Activated CD4-positive, alpha-beta T cell treated with anti-CD3 and anti-CD28 coated beads for 36 hours (primary cell): ENCODE measurements at regions of chr3 and their contacts with region 1.

Region 1: DNA sequence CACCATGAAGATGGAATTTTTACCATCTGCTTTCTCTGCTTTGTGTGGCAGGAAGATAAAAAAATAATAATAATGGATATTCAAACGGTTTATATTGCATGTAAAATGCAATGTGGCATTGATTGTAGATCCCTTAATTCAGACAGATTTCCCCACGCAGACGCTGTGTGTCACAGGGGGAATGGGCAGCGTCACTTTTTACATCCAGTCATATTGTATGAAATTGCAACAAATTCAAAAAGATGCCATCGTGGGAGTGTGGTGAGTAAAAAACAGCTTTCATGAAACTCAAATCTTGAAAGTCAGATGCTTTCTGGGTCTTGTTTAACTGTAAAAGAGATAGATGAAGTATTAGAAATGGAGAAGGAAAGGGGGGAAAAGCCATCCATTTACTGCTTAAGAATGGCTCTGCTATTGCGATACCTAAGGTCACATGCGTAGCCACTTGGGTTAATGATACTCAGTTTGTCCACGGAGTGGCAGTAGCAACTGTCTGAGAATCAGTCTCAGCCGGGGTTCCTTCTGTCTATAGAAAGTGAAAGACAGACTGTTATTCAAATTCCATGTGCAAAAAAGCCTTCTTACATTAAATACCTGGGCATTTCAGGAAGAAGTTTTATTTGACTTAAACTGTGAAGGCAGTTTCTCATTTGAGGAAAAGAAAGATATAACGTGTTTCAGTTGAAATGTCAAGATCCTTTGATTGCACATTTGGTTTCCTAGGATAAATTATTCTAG is 28.5 kb downstream of the BTD start:
- DNase-seq: peak; percentile 73
- ATAC-seq: peak; percentile 96
- H3K4me3 Mint-ChIP-seq: peak overlapping the region; percentile 52
- H3K27ac Mint-ChIP-seq: peak overlapping the region; percentile 90
- H3K4me1 Mint-ChIP-seq: peaks cover 50% of the 10 kb centered on the region
- H3K27me3 Mint-ChIP-seq: no peaks in the 10 kb centered on the region

Region 2: DNA sequence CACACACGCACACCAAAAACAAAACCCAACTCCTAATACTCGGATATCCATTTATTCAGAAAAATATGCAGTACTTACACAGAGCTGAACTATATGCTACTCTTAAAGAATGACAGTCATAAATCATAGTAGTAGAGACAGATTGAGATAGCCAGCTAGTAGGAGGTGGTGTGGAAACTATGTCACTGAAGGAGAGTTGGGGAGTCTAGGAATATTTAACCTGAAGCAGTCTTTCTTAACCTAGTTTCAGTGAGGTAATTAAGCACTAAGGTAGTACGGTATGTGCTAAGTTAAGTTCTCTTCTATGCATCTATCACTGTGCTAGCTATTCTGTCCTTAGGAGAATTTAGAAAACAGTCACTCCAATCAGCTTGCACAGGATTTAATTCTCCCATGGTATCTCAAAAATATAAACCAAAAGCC is 113.6 kb after region 1 on chr3:
- CTCF ChIA-PET with region 1: no interaction called
- POLR2A ChIA-PET with region 1: no interaction called
- intact Hi-C with region 1: loop called in 1 of 2 experiments (anchors 2 kb)
- DNase-seq: no peak
- ATAC-seq: no peak
- H3K4me3 Mint-ChIP-seq: no peak overlapping the region
- H3K27ac Mint-ChIP-seq: no peak overlapping the region
- H3K4me1 Mint-ChIP-seq: peaks cover 39% of the 10 kb centered on the region
- H3K27me3 Mint-ChIP-seq: no peaks in the 10 kb centered on the region

Region 3: DNA sequence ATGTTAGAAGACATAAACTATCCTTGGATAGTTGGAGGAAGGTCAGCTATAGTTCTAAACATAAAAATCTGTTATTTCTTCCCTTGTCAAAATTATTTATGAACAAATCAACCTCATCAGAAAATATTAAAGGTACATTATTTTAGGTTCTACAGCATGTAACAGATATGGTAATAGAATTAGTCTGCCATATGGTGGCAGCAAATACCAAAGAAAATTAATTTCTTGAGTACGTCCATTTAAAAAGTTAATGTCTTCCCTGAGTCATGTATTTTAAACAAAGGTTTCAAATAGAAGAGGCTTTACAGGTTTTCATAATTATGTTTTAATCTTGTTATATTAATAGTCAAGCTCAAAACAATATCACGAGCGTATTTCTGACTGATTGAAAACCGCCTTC is 185.7 kb after region 1 on chr3:
- CTCF ChIA-PET with region 1: interaction called, 12 read pairs
- POLR2A ChIA-PET with region 1: no interaction called
- intact Hi-C with region 1: loop called (anchors 1 kb)
- DNase-seq: no peak
- ATAC-seq: no peak
- H3K4me3 Mint-ChIP-seq: no peak overlapping the region
- H3K27ac Mint-ChIP-seq: no peak overlapping the region
- H3K4me1 Mint-ChIP-seq: peaks cover 41% of the 10 kb centered on the region
- H3K27me3 Mint-ChIP-seq: no peaks in the 10 kb centered on the region

Region 4: GRCh38 chr3:15953841-15954240 is 323.8 kb after region 1 on chr3:
- CTCF ChIA-PET with region 1: no interaction called
- POLR2A ChIA-PET with region 1: no interaction called
- intact Hi-C with region 1: loop called in 1 of 2 experiments (anchors 10 kb)
- DNase-seq: no peak
- ATAC-seq: peak; percentile 60
- H3K4me3 Mint-ChIP-seq: no peak overlapping the region
- H3K27ac Mint-ChIP-seq: no peak overlapping the region
- H3K4me1 Mint-ChIP-seq: no peaks in the 10 kb centered on the region
- H3K27me3 Mint-ChIP-seq: peaks cover 2% of the 10 kb centered on the region

Region 5: GRCh38 chr3:16177962-16178627 is 548.1 kb after region 1 on chr3:
- CTCF ChIA-PET with region 1: interaction called, 6 read pairs
- POLR2A ChIA-PET with region 1: no interaction called
- intact Hi-C with region 1: loop called (anchors 1 to 10 kb)
- DNase-seq: peak; percentile 85
- ATAC-seq: peak; percentile 87
- H3K4me3 Mint-ChIP-seq: no peak overlapping the region
- H3K27ac Mint-ChIP-seq: no peak overlapping the region
- H3K4me1 Mint-ChIP-seq: no peaks in the 10 kb centered on the region
- H3K27me3 Mint-ChIP-seq: peaks cover 18% of the 10 kb centered on the region

Region 6: GRCh38 chr3:16247276-16248061 is 617.4 kb after region 1 on chr3:
- CTCF ChIA-PET with region 1: no interaction called
- POLR2A ChIA-PET with region 1: no interaction called
- intact Hi-C with region 1: loop called (anchors 2 to 5 kb)
- DNase-seq: peak; percentile 88
- ATAC-seq: peak; percentile 83
- H3K4me3 Mint-ChIP-seq: no peak overlapping the region
- H3K27ac Mint-ChIP-seq: no peak overlapping the region
- H3K4me1 Mint-ChIP-seq: peaks cover 17% of the 10 kb centered on the region
- H3K27me3 Mint-ChIP-seq: no peaks in the 10 kb centered on the region